Natural killer cell (primary cell): ENCODE measurements at regions of chr7 and their contacts with region 1.

Region 1: DNA sequence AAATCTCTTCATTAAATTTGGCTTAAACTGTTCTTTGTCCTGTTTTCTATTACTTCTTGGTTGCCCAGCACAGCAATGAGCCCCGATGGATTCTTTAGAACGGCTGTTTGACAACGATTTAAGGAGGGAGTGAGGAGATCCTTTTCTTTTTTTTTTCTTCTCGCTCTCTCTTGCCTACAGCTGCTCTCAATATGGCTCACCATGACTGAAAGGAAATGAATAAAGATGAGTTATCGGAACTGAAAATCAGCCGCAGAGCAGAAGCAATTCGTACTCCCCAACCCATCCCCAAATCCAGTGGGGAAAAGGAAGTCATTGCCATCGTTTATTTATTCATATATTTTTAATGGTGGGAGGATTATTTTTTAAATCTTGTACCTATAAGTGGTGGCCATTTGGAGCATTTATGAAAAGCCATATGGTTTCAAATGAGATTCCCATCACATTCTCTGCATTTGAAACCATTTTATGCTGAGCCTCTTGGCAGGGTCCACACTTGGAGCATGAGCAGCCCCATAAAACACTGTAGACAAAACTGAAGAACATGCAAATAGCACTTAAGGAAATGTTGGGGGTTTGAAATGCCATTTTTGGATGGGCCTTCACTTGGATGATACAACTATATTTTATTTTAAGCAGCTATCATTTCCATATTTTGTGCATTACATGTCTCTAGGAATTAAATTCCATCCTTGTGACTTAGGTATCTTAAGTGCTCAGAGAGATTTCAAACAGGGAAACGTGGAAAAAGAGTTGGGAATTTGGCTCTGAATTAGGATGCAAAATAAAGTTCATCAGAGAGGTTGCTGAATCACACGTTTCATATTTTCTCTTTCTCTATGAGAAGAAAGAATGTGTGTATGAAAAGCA is 107.7 kb upstream of the FZD1 start:
- DNase-seq: no peak
- ATAC-seq: no peak
- H3K4me3 ChIP-seq: no peak overlapping the region
- H3K4me3 Mint-ChIP-seq: no peak overlapping the region
- H3K27ac ChIP-seq: no peak overlapping the region
- H3K27ac Mint-ChIP-seq: no peak overlapping the region
- H3K4me1 ChIP-seq: no peaks in the 10 kb centered on the region
- H3K4me1 Mint-ChIP-seq: no peaks in the 10 kb centered on the region
- H3K27me3 ChIP-seq: no peaks in the 10 kb centered on the region
- H3K27me3 Mint-ChIP-seq: no peaks in the 10 kb centered on the region
- CTCF ChIP-seq: no peak

Region 2: GRCh38 chr7:90869335-90869734 is 287.2 kb before region 1 on chr7:
- intact Hi-C with region 1: no loop called
- DNase-seq: no peak
- ATAC-seq: no peak
- H3K4me3 ChIP-seq: no peak overlapping the region
- H3K4me3 Mint-ChIP-seq: no peak overlapping the region
- H3K27ac ChIP-seq: no peak overlapping the region
- H3K27ac Mint-ChIP-seq: no peak overlapping the region
- H3K4me1 ChIP-seq: no peaks in the 10 kb centered on the region
- H3K4me1 Mint-ChIP-seq: no peaks in the 10 kb centered on the region
- H3K27me3 ChIP-seq: no peaks in the 10 kb centered on the region
- H3K27me3 Mint-ChIP-seq: no peaks in the 10 kb centered on the region
- CTCF ChIP-seq: no peak

Region 3: DNA sequence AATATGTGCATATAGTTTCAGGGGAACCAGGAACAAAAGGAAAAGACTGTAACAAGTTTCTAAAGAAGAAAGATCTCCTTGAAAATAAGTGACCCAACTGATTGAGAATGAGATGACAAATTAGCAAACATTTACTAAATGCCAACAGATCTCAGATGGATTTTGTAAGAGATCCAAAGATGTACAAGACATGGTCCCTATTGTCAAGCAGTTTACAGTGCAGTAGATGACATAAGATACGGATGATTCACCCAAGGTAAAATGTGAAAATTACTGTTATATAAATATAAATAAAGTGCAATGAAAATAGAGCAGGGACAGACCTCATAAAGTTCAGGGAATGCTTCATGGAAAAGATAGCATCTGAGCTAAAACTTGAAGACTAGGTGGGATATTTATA is 13.8 kb before region 1 on chr7:
- intact Hi-C with region 1: loop called (anchors 1 kb)
- DNase-seq: no peak
- ATAC-seq: no peak
- H3K4me3 ChIP-seq: no peak overlapping the region
- H3K4me3 Mint-ChIP-seq: no peak overlapping the region
- H3K27ac ChIP-seq: no peak overlapping the region
- H3K27ac Mint-ChIP-seq: no peak overlapping the region
- H3K4me1 ChIP-seq: no peaks in the 10 kb centered on the region
- H3K4me1 Mint-ChIP-seq: no peaks in the 10 kb centered on the region
- H3K27me3 ChIP-seq: no peaks in the 10 kb centered on the region
- H3K27me3 Mint-ChIP-seq: no peaks in the 10 kb centered on the region
- CTCF ChIP-seq: no peak